ENCODE measurements at regions of chr1 and their contacts with region 1.

Region 1: DNA sequence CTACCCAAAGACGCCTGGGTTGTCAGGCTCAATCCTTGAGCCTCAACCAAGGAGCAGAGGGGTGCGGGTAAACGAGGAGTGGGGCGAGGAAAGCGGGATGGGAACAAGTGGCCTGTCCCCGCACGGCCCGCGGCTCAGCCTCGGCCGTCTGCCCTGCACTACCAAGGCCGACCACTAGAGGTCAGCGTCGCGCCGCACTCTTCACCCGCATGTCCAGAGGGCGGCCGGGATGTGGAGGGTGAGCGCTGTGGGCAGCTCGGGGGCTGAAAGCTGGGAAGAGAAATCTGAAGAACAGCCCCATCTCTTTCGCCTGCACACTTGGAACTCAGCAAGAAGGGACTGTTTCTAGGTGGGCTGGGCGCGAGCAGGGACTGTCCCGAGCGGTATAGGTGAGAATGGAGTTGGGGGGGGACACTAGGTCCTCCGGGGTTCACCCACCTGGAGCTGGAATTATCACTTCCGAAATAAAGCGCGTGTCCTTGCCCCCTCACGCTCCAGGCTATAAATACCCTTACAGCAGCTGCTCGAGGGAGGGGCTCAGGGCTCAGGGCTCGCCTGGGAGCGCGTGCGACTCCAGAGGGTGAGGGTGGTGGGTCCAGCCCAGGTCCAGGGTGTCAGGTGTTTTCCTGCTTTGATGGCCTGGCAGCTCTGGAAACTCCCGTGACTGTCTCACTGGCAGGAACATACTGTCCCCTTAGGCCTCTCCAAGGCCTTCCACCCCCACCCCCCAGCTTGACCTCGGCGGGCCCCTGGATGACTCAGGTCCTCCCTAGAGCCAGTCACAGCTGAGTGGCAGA is 9.8 kb downstream of the SLC30A2 start:
- DNase-seq: peak; percentile 83 to 87
- ATAC-seq: peak; percentile 80 to 95 (median 90)
- H3K4me3 ChIP-seq: peak overlapping the region; percentile 75 to 94 (median 84)
- H3K27ac ChIP-seq: peak overlapping the region; percentile 83 to 96 (median 92)
- H3K4me1 ChIP-seq: peaks cover 7 to 38% (median 17%) of the 10 kb centered on the region in 9 donors
- H3K27me3 ChIP-seq: peaks cover 0 to 15% (median 0%) of the 10 kb centered on the region in 7 donors
- CTCF ChIP-seq: peak; percentile 98 to 100 (median 100)

Region 2: GRCh38 chr1:26083246-26083645 is 47.1 kb after region 1 on chr1:
- intact Hi-C with region 1: loop called in 1 of 10 experiments (anchors 5 kb)
- DNase-seq: peak in 1 of 2 donors; percentile 55
- ATAC-seq: peak; percentile 73 to 90 (median 86)
- H3K4me3 ChIP-seq: no peak overlapping the region
- H3K27ac ChIP-seq: peak overlapping the region; percentile 64 to 93 (median 79)
- H3K4me1 ChIP-seq: peaks cover 0 to 43% (median 11%) of the 10 kb centered on the region in 9 donors
- H3K27me3 ChIP-seq: peaks cover 0 to 7% (median 0%) of the 10 kb centered on the region in 7 donors
- CTCF ChIP-seq: no peak

Region 3: DNA sequence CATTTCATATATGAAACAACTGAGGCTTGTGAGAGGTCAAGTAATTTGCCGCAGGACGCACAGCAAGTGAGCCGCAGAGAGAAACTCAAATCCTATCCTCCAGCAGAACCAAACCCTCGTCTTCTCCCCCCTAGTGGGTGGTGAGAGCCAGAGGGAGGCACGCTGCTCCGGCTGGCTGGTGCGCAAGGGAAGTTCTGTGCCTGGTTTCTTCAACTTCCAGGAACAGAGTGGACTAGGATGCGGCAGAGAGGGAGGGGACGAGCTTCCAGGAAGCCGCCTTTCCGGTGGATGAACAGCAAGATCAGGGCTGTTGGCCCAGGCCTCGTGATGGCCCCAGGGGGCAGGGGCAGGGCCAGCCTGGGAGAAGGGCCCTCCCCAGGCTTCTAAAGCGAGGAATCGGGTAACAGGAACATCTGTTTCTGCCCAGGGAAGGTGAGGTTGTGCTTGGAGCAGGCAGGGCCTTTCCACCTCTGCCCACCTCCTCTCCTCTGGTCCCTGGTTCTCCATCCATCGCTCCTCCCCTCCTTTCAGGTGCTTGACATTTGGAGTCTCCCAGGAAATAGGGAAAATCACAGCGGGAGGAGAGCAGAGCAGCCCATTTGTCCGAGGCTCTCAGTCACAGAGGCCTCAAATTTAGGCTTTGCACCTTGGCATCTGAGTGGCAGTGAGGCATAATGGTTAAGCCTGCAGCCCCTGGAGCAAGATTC is 58.7 kb after region 1 on chr1:
- intact Hi-C with region 1: loop called in 6 of 10 experiments (anchors 1 to 5 kb)
- DNase-seq: peak; percentile 45 to 52
- ATAC-seq: peak; percentile 43 to 88 (median 72)
- H3K4me3 ChIP-seq: peak overlapping the region in 5 of 10 donors; percentile 21 to 33 (median 21)
- H3K27ac ChIP-seq: peak overlapping the region; percentile 31 to 92 (median 87)
- H3K4me1 ChIP-seq: peaks cover 0 to 22% (median 18%) of the 10 kb centered on the region in 9 donors
- H3K27me3 ChIP-seq: peaks cover 0 to 14% (median 0%) of the 10 kb centered on the region in 7 donors
- CTCF ChIP-seq: peak in 3 of 9 donors; percentile 26 to 39 (median 32)

Region 4: DNA sequence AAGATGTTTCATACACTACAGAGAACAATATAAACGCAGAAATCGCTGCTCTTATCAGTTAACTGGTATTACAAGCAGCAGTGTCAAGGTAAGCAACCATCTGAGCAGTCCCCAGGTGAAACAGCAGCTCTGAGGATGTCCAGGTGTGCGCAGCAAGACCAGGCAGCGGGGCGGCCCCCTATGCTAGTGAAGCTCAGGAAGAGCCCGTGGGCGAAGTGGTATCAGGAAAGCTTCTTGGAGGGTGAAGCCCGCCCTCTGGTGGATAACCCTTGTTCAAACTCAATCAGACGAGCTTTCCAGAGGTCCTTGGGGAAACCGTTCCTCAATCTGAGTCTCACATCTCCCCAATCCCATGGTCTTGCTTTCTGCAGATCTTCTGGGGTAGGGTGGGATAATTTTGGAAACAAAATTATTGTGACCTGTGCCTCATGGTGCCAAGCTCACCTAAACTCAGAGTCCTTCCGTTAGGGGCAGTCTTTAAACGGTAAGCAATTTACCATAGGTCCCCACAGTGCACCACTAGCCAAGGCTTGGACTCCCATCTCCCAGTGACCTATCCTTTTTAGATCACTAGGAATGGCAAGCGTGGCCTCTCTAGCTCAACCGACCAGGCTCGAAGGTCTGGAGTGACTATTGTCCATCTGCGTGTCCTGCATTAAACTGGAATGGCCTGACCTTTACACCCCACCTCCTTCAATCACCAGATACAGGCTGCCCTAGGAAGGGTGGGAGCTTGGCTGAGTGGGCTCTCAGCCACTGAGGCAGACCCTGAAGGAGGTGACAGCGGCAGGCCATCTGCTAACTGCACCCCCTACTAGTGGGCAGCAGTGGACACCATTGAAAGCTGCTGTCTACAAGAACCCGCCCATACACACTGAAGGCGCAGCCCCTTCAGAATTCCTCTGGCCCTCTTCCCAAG is 109.1 kb after region 1 on chr1:
- intact Hi-C with region 1: loop called in 9 of 10 experiments (anchors 1 to 10 kb)
- DNase-seq: peak; percentile 60 to 80
- ATAC-seq: peak; percentile 83 to 96 (median 94)
- H3K4me3 ChIP-seq: no peak overlapping the region
- H3K27ac ChIP-seq: no peak overlapping the region
- H3K4me1 ChIP-seq: peaks cover 0 to 14% (median 4%) of the 10 kb centered on the region in 9 donors
- H3K27me3 ChIP-seq: no peaks in the 10 kb centered on the region
- CTCF ChIP-seq: peak; percentile 72 to 89 (median 82)

Region 5: DNA sequence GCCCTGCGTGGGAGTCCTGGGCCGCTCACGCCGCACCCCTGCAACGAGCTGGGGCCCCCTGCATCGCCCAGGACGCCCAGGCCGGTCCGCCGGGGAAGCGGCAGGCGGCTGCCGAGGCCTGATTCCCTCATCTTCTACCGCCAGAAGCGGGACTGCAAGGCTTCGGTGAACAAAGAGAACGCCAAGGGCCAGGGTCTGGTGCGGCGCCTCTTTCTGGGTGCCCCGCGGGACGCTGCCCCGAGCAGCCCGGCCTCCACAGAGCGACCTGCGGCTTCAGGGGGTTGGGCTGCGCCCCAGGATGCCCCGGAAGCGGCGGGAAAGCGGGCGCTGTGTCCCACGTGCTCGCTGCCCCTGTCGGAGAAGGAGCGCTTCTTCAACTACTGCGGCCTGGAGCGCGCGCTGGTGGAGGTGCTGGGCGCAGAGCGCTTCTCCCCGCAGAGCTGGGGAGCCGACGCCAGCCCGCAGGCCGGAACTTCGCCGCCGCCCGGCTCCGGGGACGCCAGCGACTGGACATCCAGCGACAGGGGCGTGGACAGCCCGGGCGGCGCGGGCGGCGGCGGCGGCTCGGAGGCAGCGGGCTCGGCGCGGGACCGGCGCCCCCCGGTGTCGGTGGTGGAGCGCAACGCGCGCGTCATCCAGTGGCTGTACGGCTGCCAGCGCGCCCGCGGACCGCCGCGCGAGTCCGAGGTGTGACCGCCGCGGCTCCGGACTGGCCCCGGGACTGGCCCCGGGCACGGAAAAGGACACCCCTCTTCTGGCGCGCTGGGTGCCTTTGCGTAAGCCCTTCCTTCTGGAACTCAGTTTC is 125.5 kb after region 1 on chr1:
- intact Hi-C with region 1: loop called in 2 of 10 experiments (anchors 5 kb)
- DNase-seq: peak; percentile 60 to 79
- ATAC-seq: peak; percentile 19 to 65 (median 48)
- H3K4me3 ChIP-seq: peak overlapping the region; percentile 29 to 70 (median 60)
- H3K27ac ChIP-seq: peak overlapping the region; percentile 85 to 97 (median 93)
- H3K4me1 ChIP-seq: peaks cover 27 to 76% (median 58%) of the 10 kb centered on the region in 9 donors
- H3K27me3 ChIP-seq: peaks cover 0 to 66% (median 0%) of the 10 kb centered on the region in 7 donors
- CTCF ChIP-seq: peak in 5 of 9 donors; percentile 13 to 53 (median 41)

Region 6: GRCh38 chr1:26169669-26170471 is 133.7 kb after region 1 on chr1 and contains the start of gene ZNF593:
- intact Hi-C with region 1: loop called in 1 of 10 experiments (anchors 1 kb)
- DNase-seq: peak; percentile 92 to 94
- ATAC-seq: peak; percentile 96 to 98 (median 97)
- H3K4me3 ChIP-seq: peak within 1 kb of the TSS; percentile 63 to 100 (median 88)
- H3K27ac ChIP-seq: peak within 1 kb of the TSS in 9 of 10 donors; percentile 79 to 89 (median 82)
- H3K4me1 ChIP-seq: peaks cover 5 to 33% (median 16%) of the 10 kb centered on the region in 9 donors
- H3K27me3 ChIP-seq: no peaks in the 10 kb centered on the region
- CTCF ChIP-seq: peak; percentile 80 to 97 (median 91)
- total RNA-seq, gene ZNF593: 10.7 to 26.0 (median 18.3) TPM

Region 7: GRCh38 chr1:26233903-26234643 is 197.9 kb after region 1 on chr1 and contains the start of gene CEP85:
- intact Hi-C with region 1: loop called in 1 of 10 experiments (anchors 1 kb)
- DNase-seq: peak; percentile 97 to 99
- ATAC-seq: peak; percentile 99 to 100 (median 99)
- H3K4me3 ChIP-seq: peak within 1 kb of the TSS; percentile 62 to 93 (median 72)
- H3K27ac ChIP-seq: peak within 1 kb of the TSS; percentile 69 to 94 (median 89)
- H3K4me1 ChIP-seq: peaks cover 0 to 42% (median 14%) of the 10 kb centered on the region in 9 donors
- H3K27me3 ChIP-seq: no peaks in the 10 kb centered on the region
- CTCF ChIP-seq: peak; percentile 69 to 95 (median 85)
- total RNA-seq, gene CEP85: 29.9 to 74.5 (median 53.8) TPM

Region 8: DNA sequence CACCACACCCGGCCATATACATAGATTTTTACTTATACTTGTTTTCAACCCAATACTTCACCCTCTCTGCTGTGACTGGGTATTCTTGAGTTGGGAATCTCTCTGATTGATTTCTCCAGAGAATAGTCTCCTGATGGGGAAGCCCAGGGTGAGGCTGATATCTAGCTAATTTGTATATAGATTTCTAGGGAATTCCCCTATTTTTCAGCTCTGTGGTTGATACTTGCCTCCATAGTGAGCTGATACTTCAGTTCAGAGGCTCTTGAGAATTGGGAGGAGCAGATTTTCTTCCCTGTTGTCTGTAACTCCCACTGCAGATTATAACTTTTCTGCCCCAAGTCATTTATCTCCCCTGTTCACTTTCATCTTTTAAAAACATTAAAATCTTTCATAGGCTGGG is 229.2 kb after region 1 on chr1:
- intact Hi-C with region 1: no loop called
- DNase-seq: no peak
- ATAC-seq: no peak
- H3K4me3 ChIP-seq: no peak overlapping the region
- H3K27ac ChIP-seq: no peak overlapping the region
- H3K4me1 ChIP-seq: peaks cover 0 to 12% (median 0%) of the 10 kb centered on the region in 9 donors
- H3K27me3 ChIP-seq: no peaks in the 10 kb centered on the region
- CTCF ChIP-seq: no peak

Measured in heart right ventricle (tissue), 16 donors.